Upper lobe of right lung (tissue), 1 donor: ENCODE measurements at regions of chr1 and their contacts with region 1.

Region 1: DNA sequence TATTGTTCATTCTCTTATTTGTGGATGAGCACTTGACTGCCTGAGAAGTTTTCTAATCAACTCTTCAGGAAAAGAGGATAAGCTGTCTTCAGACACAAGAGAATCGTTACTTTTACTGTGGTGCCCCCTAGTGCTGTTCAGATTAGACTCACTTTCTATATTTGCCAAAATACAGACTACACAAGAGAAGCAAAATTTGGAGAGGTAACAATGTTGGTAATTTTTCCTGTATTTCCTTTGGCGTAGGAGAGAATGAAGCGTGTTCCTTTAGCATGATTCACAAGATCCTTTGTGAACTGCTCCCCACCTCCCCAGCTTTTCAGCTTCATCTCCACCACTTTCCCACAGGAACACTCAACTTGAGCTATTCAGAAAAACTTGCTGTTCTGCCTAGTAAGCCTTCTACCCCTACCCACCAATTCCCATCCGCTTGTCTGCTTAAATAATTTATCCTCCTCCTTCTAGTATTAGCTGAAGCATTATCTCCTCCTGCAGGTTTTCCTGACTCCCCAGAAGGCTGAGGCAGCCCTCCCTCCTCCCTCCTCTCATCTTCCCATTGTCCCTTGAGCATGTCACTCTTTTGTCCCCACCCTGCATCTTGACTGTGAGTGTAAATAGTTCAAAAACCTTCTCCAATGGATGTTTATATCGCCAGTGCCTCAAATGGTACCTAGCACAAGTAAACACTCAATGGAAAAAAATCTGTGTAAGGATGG is 4.5 kb downstream of the TNFSF4 start:
- DNase-seq: no peak
- ATAC-seq: peak; percentile 85
- H3K4me3 ChIP-seq: no peak overlapping the region
- H3K27ac ChIP-seq: no peak overlapping the region
- H3K4me1 ChIP-seq: peaks cover 21% of the 10 kb centered on the region
- H3K27me3 ChIP-seq: no peaks in the 10 kb centered on the region
- CTCF ChIP-seq: peak; percentile 64

Region 2: GRCh38 chr1:172745014-172745413 is 457.6 kb before region 1 on chr1:
- intact Hi-C with region 1: loop called (anchors 10 kb)
- DNase-seq: no peak
- ATAC-seq: peak; percentile 86
- H3K4me3 ChIP-seq: no peak overlapping the region
- H3K27ac ChIP-seq: peak overlapping the region; percentile 76
- H3K4me1 ChIP-seq: peaks cover 23% of the 10 kb centered on the region
- H3K27me3 ChIP-seq: no peaks in the 10 kb centered on the region
- CTCF ChIP-seq: peak; percentile 68

Region 3: DNA sequence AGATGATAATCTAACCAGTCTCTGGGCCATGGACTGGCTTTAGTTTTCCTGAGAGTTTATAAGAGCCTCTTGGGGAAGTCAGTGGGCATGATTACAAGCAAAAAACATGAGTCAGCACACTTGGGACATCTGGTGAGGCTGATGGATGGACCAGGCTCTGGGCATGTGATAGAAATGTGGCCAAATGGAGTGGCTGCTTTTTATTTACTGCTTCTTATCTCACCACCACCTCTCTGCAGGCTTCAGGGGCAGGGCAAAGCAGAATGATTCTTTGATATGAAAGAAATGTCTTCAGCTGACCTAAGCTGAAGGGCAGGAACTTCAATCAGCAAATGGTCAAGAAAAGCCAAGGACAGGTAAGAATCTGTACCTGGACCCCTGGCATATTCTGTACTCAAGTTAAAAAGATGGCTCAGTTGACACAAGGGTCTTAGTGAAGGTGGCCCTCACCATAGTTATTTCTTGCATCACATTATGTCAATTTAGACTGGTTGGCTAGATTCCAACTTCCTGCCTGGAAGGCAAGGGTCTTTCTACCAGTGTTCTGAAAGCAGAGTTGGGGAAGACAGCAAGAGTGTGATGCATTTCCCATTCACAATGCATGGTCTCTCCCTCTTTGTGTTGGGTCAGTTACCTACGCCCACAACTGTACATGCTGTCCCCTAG is 380.8 kb before region 1 on chr1:
- intact Hi-C with region 1: loop called (anchors 2 kb)
- DNase-seq: no peak
- ATAC-seq: peak; percentile 15
- H3K4me3 ChIP-seq: no peak overlapping the region
- H3K27ac ChIP-seq: no peak overlapping the region
- H3K4me1 ChIP-seq: peaks cover 5% of the 10 kb centered on the region
- H3K27me3 ChIP-seq: no peaks in the 10 kb centered on the region
- CTCF ChIP-seq: no peak